ENCODE measurements at regions of chr5 and their contacts with region 1.

Region 1: DNA sequence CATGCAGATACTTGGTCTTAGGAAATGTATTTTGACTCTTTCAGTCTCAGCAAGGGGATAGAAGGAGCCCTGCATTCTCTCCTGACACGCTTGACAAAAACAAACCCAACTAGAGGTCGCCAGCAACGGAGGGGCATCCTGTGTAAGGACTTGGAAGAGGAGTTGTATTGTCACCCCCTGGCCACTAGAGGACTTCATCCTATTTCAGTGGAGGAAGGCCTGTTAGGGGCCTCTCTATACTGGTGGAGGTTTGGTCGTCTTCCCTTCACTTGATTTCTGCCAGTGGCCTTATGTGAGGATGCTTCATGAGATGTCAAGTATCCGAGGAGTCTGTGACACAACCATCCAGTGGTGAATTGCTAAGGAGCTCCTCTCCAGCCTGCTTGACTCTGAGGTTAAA is 122.8 kb upstream of the STC2 start:
- DNase-seq: no peak
- ATAC-seq: no peak
- H3K4me3 ChIP-seq: no peak overlapping the region
- H3K27ac ChIP-seq: no peak overlapping the region
- H3K4me1 ChIP-seq: no peaks in the 10 kb centered on the region
- H3K27me3 ChIP-seq: no peaks in the 10 kb centered on the region

Region 2: DNA sequence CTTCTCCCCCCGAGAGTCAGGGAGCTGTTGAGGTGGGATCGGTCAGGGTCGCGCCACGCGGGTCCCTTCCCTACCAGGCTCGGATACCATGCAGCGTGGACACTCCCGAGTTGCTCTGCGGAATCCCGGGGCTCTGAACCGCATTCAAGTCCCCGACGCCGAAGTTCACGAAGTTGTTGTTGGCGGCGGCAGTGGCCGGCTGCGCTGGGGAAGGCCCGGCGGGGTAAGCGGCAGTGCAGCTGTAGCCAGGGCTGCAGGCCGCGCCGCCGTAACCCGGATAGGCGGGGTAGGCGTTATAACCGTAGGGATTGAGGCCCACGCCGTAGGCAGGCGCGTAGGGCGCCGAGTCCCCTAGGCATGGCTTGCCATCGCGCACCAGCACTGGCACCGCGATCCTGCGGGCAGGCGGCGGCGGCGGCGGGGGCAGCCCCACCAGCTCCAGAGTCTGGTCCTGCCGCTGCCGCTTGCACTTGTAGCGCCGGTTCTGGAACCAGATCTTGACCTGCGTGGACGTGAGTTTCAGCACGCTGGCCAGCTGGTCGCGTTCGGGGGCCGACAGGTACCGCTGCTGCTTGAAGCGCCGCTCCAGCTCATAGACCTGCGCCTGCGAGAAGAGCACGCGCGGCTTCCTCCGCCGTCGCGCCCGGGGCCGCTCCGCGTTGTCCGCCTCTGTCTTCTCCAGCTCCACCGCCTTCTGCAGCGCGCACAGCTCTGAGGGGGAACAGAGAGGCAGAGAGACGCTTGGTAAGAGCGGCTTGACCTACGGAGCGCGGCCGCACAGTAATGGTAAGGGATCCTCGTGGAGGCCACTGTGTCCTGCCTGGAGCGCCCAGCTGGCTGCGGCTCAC is 218.3 kb before region 1 on chr5:
- intact Hi-C with region 1: no loop called
- DNase-seq: peak in 1 of 2 donors; percentile 69
- ATAC-seq: no peak
- H3K4me3 ChIP-seq: no peak overlapping the region
- H3K27ac ChIP-seq: no peak overlapping the region
- H3K4me1 ChIP-seq: no peaks in the 10 kb centered on the region
- H3K27me3 ChIP-seq: peaks cover 0 to 2% of the 10 kb centered on the region in 2 donors

Region 3: GRCh38 chr5:173554038-173554954 is 103.3 kb after region 1 on chr5:
- intact Hi-C with region 1: loop called in 1 of 2 experiments (anchors 10 kb)
- DNase-seq: no peak
- ATAC-seq: no peak
- H3K4me3 ChIP-seq: no peak overlapping the region
- H3K27ac ChIP-seq: no peak overlapping the region
- H3K4me1 ChIP-seq: no peaks in the 10 kb centered on the region
- H3K27me3 ChIP-seq: no peaks in the 10 kb centered on the region